ENCODE measurements at regions of chr15 and their contacts with region 1.

Region 1: GRCh38 chr15:66619151-66619903 is 53.5 kb upstream of the LCTL start:
- DNase-seq: peak; percentile 61
- H3K4me3 Mint-ChIP-seq: no peak overlapping the region
- H3K27ac Mint-ChIP-seq: no peak overlapping the region
- H3K4me1 Mint-ChIP-seq: peaks cover 4% of the 10 kb centered on the region
- H3K27me3 Mint-ChIP-seq: peaks cover 20% of the 10 kb centered on the region

Region 2: GRCh38 chr15:66560851-66561525 is 58.3 kb before region 1 on chr15:
- CTCF ChIA-PET with region 1: no interaction called
- intact Hi-C with region 1: no loop called
- DNase-seq: no peak
- H3K4me3 Mint-ChIP-seq: no peak overlapping the region
- H3K27ac Mint-ChIP-seq: no peak overlapping the region
- H3K4me1 Mint-ChIP-seq: no peaks in the 10 kb centered on the region
- H3K27me3 Mint-ChIP-seq: no peaks in the 10 kb centered on the region

Region 3: GRCh38 chr15:66774001-66774814 is 154.9 kb after region 1 on chr15:
- CTCF ChIA-PET with region 1: interaction called, 14 read pairs
- intact Hi-C with region 1: loop called (anchors 1 kb)
- DNase-seq: peak; percentile 72
- H3K4me3 Mint-ChIP-seq: no peak overlapping the region
- H3K27ac Mint-ChIP-seq: no peak overlapping the region
- H3K4me1 Mint-ChIP-seq: no peaks in the 10 kb centered on the region
- H3K27me3 Mint-ChIP-seq: no peaks in the 10 kb centered on the region